Activated CD8-positive, alpha-beta T cell treated with anti-CD3 and anti-CD28 coated beads for 36 hours (primary cell): ENCODE measurements at regions of chr19 and their contacts with region 1.

Region 1: GRCh38 chr19:51473009-51473707 is 5.2 kb upstream of the CEACAM18 start:
- DNase-seq: peak; percentile 95
- ATAC-seq: peak; percentile 93
- H3K4me3 Mint-ChIP-seq: no peak overlapping the region
- H3K27ac Mint-ChIP-seq: no peak overlapping the region
- H3K4me1 Mint-ChIP-seq: peaks cover 18% of the 10 kb centered on the region
- H3K27me3 Mint-ChIP-seq: peaks cover 8% of the 10 kb centered on the region
- CTCF ChIP-seq: peak; percentile 96

Region 2: GRCh38 chr19:51207744-51208143 is 265.4 kb before region 1 on chr19:
- CTCF ChIA-PET with region 1: no interaction called
- POLR2A ChIA-PET with region 1: no interaction called
- intact Hi-C with region 1: no loop called
- DNase-seq: no peak
- ATAC-seq: no peak
- H3K4me3 Mint-ChIP-seq: no peak overlapping the region
- H3K27ac Mint-ChIP-seq: no peak overlapping the region
- H3K4me1 Mint-ChIP-seq: no peaks in the 10 kb centered on the region
- H3K27me3 Mint-ChIP-seq: peaks cover 18% of the 10 kb centered on the region
- CTCF ChIP-seq: no peak

Region 3: DNA sequence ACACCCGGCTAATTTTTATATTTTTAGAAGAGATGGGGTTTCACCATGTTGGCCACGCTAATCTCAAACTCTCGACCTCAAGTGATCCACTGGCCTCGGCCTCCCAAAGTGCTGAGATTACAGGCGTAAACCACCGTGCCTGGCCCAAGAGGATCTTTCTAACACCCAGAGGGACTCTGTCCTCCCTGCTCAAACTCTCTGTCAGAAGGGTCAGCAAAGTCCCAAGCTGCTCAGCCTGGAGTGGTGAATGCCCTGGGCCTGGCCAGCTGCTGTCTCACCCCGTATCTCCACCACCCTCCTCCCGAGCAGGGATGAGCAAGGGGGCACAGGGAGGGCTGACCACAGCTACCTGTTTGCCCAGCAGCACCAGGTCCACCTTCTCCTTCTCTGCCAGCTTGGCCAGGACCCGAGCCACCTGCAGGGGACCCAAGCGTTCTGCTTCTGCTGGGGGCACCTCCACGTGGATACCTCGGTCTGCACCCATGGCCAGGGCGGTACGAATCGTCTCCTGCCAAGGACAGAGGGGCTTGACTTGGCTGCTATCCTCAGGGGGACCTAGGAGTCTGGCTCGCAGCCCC is 120.3 kb before region 1 on chr19:
- CTCF ChIA-PET with region 1: no interaction called
- POLR2A ChIA-PET with region 1: no interaction called
- intact Hi-C with region 1: no loop called
- DNase-seq: no peak
- ATAC-seq: no peak
- H3K4me3 Mint-ChIP-seq: no peak overlapping the region
- H3K27ac Mint-ChIP-seq: no peak overlapping the region
- H3K4me1 Mint-ChIP-seq: peaks cover 17% of the 10 kb centered on the region
- H3K27me3 Mint-ChIP-seq: no peaks in the 10 kb centered on the region
- CTCF ChIP-seq: no peak

Region 4: DNA sequence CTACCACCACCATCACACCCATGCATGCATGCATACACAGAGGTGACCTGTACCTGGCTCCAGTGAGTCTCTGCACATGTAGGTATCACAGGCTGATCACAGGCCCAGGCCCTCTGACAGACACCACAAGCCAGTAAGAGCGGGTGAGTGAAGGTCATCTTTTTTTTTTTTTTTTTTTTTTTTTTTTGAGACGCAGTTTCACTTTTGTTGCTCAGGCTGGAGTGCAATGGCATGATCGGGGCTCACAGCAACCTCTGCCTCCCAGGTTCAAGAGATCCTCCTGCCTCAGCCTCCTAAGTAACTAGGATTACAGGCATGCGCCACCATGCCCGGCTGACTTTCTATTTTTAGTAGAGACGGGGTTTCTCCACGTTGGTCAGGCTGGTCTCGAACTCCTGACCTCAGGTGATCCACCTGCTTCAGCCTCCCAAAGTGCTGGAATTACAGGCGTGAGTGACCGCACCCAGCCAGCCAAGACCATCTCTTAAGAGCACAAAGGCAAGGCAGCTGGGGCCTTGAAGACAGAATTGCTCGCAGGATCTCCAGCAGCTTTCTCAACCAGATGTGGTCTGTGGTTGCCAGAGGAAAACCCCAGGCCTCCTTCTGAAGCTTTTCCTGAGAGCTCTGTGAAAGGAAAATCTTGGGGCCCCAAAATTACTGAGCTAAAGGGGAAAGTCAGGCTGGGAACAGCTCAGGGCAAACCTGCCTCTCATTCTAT is 97.5 kb before region 1 on chr19:
- CTCF ChIA-PET with region 1: no interaction called
- POLR2A ChIA-PET with region 1: no interaction called
- intact Hi-C with region 1: no loop called
- DNase-seq: peak; percentile 77
- ATAC-seq: peak; percentile 12
- H3K4me3 Mint-ChIP-seq: peak overlapping the region; percentile 72
- H3K27ac Mint-ChIP-seq: peak overlapping the region; percentile 94
- H3K4me1 Mint-ChIP-seq: peaks cover 65% of the 10 kb centered on the region
- H3K27me3 Mint-ChIP-seq: no peaks in the 10 kb centered on the region
- CTCF ChIP-seq: no peak

Region 5: GRCh38 chr19:51422053-51422448 is 51.1 kb before region 1 on chr19:
- CTCF ChIA-PET with region 1: interaction called, 24 read pairs
- POLR2A ChIA-PET with region 1: no interaction called
- intact Hi-C with region 1: no loop called
- DNase-seq: peak; percentile 93
- ATAC-seq: peak; percentile 78
- H3K4me3 Mint-ChIP-seq: no peak overlapping the region
- H3K27ac Mint-ChIP-seq: no peak overlapping the region
- H3K4me1 Mint-ChIP-seq: peaks cover 22% of the 10 kb centered on the region
- H3K27me3 Mint-ChIP-seq: peaks cover 20% of the 10 kb centered on the region
- CTCF ChIP-seq: peak; percentile 100

Region 6: DNA sequence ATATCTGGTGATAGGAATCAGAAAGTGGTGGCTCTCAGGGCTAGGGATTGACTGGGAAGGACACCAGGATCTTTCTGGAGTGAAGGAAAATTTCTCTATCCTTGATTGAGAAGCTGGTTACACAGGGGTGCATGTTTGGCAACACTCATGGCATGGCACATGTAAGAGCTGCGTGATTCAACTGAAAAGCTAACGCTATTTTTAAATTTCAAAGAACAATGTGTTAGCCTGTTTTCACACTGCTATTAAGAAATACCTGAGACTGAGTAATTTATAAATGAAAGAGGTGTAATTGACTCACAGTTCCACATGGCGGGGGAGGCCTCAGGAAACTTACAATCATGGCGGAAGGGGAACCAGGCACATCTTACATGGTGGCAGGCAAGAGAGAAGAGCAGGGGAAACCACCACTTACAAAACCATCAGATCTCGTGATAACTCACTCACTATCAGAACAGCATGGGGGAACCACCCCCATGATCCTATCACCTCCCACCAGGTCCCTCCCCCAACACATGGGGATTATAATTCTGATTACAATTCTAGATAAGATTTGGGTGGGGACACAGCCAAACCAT is 22.3 kb before region 1 on chr19:
- CTCF ChIA-PET with region 1: interaction called, 10 read pairs
- POLR2A ChIA-PET with region 1: interaction called, 3 read pairs
- intact Hi-C with region 1: no loop called
- DNase-seq: peak; percentile 71
- ATAC-seq: peak; percentile 27
- H3K4me3 Mint-ChIP-seq: no peak overlapping the region
- H3K27ac Mint-ChIP-seq: peak overlapping the region; percentile 76
- H3K4me1 Mint-ChIP-seq: peaks cover 36% of the 10 kb centered on the region
- H3K27me3 Mint-ChIP-seq: peaks cover 2% of the 10 kb centered on the region
- CTCF ChIP-seq: no peak

Region 7: DNA sequence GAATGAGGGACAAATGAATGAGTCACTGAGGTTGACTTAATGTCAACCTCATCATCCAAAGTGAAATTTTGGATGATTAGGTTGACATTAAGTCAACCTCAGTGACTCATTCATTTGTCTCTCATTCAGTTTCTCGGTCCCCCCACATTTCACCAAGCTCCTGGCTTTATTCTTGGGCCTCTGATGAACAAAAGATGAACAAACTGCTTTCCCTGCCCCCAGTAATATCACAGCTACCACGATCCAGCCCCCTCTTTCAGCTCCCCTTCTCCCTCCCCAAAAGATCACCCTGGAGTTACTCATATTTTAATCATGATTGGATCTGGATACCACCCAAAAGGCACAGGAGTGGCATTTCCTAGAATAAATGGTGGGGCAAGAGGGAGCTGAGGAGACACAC is 16.0 kb after region 1 on chr19:
- CTCF ChIA-PET with region 1: interaction called, 29 read pairs
- POLR2A ChIA-PET with region 1: interaction called, 3 read pairs
- intact Hi-C with region 1: no loop called
- DNase-seq: peak; percentile 65
- ATAC-seq: peak; percentile 94
- H3K4me3 Mint-ChIP-seq: no peak overlapping the region
- H3K27ac Mint-ChIP-seq: peak overlapping the region; percentile 72
- H3K4me1 Mint-ChIP-seq: peaks cover 21% of the 10 kb centered on the region
- H3K27me3 Mint-ChIP-seq: peaks cover 23% of the 10 kb centered on the region
- CTCF ChIP-seq: no peak

Region 8: DNA sequence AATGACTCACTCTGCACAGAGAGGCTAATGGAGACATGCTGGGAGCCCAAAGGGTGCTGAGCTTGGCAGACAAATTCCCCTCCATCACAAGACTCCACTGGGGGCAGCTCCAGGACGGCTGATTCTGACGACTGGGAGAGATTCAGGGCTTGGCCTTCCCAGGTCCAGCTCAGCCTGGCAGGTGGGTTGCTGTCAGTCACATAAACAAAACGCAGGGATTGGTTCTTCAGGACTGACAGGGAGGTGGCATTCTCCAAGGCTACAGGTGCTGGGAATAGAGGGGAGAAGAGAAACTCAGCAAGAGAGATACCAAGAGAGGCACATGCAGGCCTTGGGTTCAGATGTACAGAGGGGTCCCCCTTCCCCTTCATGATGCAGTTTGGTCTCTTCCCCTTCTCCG is 87.2 kb after region 1 on chr19:
- CTCF ChIA-PET with region 1: no interaction called
- POLR2A ChIA-PET with region 1: no interaction called
- intact Hi-C with region 1: no loop called
- DNase-seq: no peak
- ATAC-seq: no peak
- H3K4me3 Mint-ChIP-seq: no peak overlapping the region
- H3K27ac Mint-ChIP-seq: no peak overlapping the region
- H3K4me1 Mint-ChIP-seq: no peaks in the 10 kb centered on the region
- H3K27me3 Mint-ChIP-seq: peaks cover 54% of the 10 kb centered on the region
- CTCF ChIP-seq: no peak

Region 9: GRCh38 chr19:51637362-51637978 is 164.3 kb after region 1 on chr19:
- CTCF ChIA-PET with region 1: interaction called, 16 read pairs
- POLR2A ChIA-PET with region 1: no interaction called
- intact Hi-C with region 1: no loop called
- DNase-seq: no peak
- ATAC-seq: no peak
- H3K4me3 Mint-ChIP-seq: no peak overlapping the region
- H3K27ac Mint-ChIP-seq: no peak overlapping the region
- H3K4me1 Mint-ChIP-seq: no peaks in the 10 kb centered on the region
- H3K27me3 Mint-ChIP-seq: peaks cover 26% of the 10 kb centered on the region
- CTCF ChIP-seq: peak; percentile 65

Region 10: DNA sequence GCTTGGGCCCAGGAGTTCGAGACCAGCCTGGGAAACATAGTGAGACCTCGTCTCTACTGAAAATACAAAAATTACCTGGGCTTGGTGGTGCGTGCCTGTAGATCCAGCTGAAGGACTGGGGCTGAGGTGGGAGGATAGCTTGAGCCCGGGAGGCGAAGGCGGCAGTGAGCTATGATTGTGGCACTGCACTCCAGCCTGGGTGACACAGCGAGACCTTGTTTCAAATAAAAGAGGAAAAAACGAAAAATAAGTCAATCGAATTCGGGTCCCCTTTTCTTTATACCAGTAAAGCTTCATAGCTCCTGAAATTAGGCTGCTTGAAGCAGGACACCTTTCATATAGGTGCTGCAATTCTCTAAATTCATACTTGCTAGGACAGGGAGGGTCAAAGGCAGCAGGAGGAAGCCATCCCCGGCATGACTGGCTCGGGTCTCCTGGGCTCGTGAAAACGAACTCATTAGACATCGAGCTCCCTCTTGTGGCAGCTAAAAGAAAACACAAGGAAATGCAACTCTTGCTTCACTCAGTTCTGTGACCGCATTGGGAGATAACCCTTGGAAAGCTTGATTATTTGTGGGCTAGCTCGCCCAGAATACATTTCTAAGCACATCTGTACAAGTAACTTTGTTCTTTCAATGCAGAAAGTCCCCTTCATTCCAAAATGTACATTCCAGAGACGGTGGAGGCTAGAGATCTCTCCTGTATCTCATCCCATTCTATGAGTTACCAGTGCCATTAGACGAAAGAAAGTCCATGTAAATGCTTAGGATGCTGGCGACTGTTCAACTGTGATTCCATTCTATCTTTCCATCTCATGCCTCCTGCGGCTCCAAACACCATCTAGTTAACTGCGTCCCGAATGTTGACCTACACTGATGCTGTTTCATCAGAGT is 304.7 kb after region 1 on chr19:
- CTCF ChIA-PET with region 1: interaction called, 10 read pairs
- POLR2A ChIA-PET with region 1: no interaction called
- intact Hi-C with region 1: no loop called
- DNase-seq: peak; percentile 54
- ATAC-seq: peak; percentile 60
- H3K4me3 Mint-ChIP-seq: no peak overlapping the region
- H3K27ac Mint-ChIP-seq: no peak overlapping the region
- H3K4me1 Mint-ChIP-seq: peaks cover 2% of the 10 kb centered on the region
- H3K27me3 Mint-ChIP-seq: peaks cover 62% of the 10 kb centered on the region
- CTCF ChIP-seq: peak; percentile 80